GM12878 (cell line): ENCODE measurements at regions of chr20 and their contacts with region 1.

Region 1: GRCh38 chr20:47411161-47411560 is 54.7 kb upstream of the ZMYND8 start:
- DNase-seq: no peak
- ATAC-seq: no peak
- H3K4me3 ChIP-seq: peak overlapping the region; percentile 64
- H3K27ac ChIP-seq: peak overlapping the region; percentile 91
- H3K4me1 ChIP-seq: peaks cover 55% of the 10 kb centered on the region
- H3K27me3 ChIP-seq: no peaks in the 10 kb centered on the region
- CTCF ChIP-seq: no peak
- EP300 ChIP-seq: no peak
- POLR2A ChIP-seq: no peak
- RAD21 ChIP-seq: no peak

Region 2: DNA sequence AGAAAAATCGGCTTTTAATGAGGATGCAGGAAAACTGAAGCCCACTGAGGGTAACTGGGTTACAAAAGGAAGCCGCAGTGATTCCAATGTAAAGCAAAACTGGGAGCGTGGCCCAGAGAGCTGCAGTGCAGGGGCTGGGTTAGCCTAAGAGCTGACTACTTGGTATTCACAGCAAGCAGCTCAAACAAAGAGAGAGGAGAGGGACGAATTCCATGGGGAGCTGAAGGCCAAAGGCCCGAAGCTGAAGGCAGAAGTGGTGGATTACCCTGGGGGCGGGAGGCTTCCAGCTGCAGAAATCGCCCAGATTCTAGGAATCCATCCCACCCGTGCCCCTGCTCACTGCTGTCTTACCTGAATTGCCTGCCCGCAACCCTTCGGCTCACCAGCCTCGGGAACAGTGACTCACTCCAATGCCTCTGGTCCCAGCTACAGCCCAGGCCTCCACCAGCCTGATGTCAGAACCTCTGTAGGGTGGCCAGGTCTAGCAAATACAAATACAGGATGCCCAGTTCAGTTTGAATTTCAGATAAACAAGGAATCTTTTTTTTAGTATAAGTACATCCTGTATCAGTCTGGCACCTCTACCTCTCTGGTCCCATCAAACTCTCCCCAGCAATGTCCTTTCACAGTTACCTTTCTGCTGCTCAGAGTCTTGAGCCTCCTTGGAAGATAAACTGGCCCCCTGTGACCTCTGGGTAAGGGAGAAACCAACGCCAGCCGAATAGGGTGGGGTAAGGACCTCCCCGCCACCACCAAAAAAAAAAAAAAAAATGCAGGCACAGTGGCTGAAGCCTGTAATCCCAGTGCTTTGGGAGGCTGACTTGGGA is 40.1 kb before region 1 on chr20:
- CTCF ChIA-PET with region 1: no interaction called
- POLR2A ChIA-PET with region 1: no interaction called
- RAD21 ChIA-PET with region 1: no interaction called
- SMC1A ChIA-PET with region 1: no interaction called
- in situ Hi-C with region 1: no loop called
- intact Hi-C with region 1: no loop called
- DNase-seq: no peak
- ATAC-seq: no peak
- H3K4me3 ChIP-seq: no peak overlapping the region
- H3K27ac ChIP-seq: no peak overlapping the region
- H3K4me1 ChIP-seq: no peaks in the 10 kb centered on the region
- H3K27me3 ChIP-seq: no peaks in the 10 kb centered on the region
- CTCF ChIP-seq: no peak
- EP300 ChIP-seq: no peak
- POLR2A ChIP-seq: no peak
- RAD21 ChIP-seq: no peak

Region 3: DNA sequence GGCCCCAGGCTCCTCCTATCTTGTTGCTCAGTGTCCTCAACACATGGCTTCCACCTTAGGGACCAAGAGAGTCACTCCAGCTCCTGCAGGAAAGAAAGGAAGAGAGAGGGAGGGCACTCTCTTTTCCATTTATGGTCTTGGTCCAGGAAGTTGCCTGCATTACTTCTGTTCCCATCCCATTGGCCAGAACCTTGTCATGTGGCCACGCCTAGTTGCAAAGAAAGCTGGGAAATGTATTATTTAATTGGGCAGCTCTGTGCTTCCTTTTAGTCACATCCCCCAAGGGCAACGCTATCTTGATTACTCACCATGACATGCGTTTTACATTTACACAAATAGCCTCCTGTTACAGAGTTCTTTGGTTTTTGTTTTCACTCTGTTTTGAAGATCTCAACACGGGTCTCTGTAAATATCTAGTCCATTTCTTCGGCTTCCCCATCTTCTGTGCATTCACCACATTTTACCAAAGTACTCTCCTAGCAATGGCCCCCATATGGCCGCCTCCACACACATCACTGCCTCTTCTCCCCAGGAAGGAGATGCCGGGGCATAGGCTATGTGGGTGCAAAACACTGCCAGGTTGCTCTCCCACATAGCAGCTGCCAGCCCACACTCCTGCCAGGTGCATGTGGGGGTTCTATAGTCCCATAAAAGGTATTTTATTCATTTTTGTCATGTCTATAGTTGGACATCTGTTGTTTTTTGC is 19.0 kb before region 1 on chr20:
- CTCF ChIA-PET with region 1: interaction called, 6 read pairs
- POLR2A ChIA-PET with region 1: interaction called, 11 read pairs
- RAD21 ChIA-PET with region 1: interaction called, 14 read pairs
- SMC1A ChIA-PET with region 1: interaction called, 16 read pairs
- in situ Hi-C with region 1: no loop called
- intact Hi-C with region 1: no loop called
- DNase-seq: no peak
- ATAC-seq: peak; percentile 90
- H3K4me3 ChIP-seq: no peak overlapping the region
- H3K27ac ChIP-seq: peak overlapping the region; percentile 11
- H3K4me1 ChIP-seq: peaks cover 20% of the 10 kb centered on the region
- H3K27me3 ChIP-seq: no peaks in the 10 kb centered on the region
- CTCF ChIP-seq: no peak
- EP300 ChIP-seq: no peak
- POLR2A ChIP-seq: 0 out of 2 replicates have a peak, but pooled peaks have one; percentile 26
- RAD21 ChIP-seq: no peak

Region 4: GRCh38 chr20:47453142-47453782 is 42.1 kb after region 1 on chr20:
- CTCF ChIA-PET with region 1: interaction called, 6 read pairs
- POLR2A ChIA-PET with region 1: interaction called, 7 read pairs
- RAD21 ChIA-PET with region 1: interaction called, 22 read pairs
- SMC1A ChIA-PET with region 1: interaction called, 82 read pairs
- in situ Hi-C with region 1: no loop called
- intact Hi-C with region 1: loop called (anchors 1 kb)
- DNase-seq: peak; percentile 92
- ATAC-seq: peak; percentile 98
- H3K4me3 ChIP-seq: peak overlapping the region; percentile 36; the same call in 1 of the 2 replicates
- H3K27ac ChIP-seq: peak overlapping the region; percentile 87
- H3K4me1 ChIP-seq: peaks cover 31% of the 10 kb centered on the region
- H3K27me3 ChIP-seq: no peaks in the 10 kb centered on the region
- CTCF ChIP-seq: no peak
- EP300 ChIP-seq: peak; percentile 27 to 28; a peak in 2 of 4 replicates
- POLR2A ChIP-seq: peak; percentile 27; the same call in 1 of the 2 replicates
- RAD21 ChIP-seq: 0 out of 2 replicates have a peak, but pooled peaks have one; percentile 14

Region 5: GRCh38 chr20:47487175-47487917 is 76.2 kb after region 1 on chr20:
- CTCF ChIA-PET with region 1: interaction called, 21 read pairs
- POLR2A ChIA-PET with region 1: interaction called, 55 read pairs
- RAD21 ChIA-PET with region 1: interaction called, 143 read pairs
- SMC1A ChIA-PET with region 1: interaction called, 122 read pairs
- in situ Hi-C with region 1: no loop called
- intact Hi-C with region 1: loop called (anchors 1 kb)
- DNase-seq: peak; percentile 99
- ATAC-seq: peak; percentile 84
- H3K4me3 ChIP-seq: peak overlapping the region; percentile 43; the same call in 1 of the 2 replicates
- H3K27ac ChIP-seq: peak overlapping the region; percentile 98
- H3K4me1 ChIP-seq: peaks cover 56% of the 10 kb centered on the region
- H3K27me3 ChIP-seq: no peaks in the 10 kb centered on the region
- CTCF ChIP-seq: no peak
- EP300 ChIP-seq: peak; percentile 87 to 92
- POLR2A ChIP-seq: no peak
- RAD21 ChIP-seq: 0 out of 2 replicates have a peak, but pooled peaks have one; percentile 1

Region 6: GRCh38 chr20:47508278-47508677 is 97.1 kb after region 1 on chr20:
- CTCF ChIA-PET with region 1: interaction called, 31 read pairs
- POLR2A ChIA-PET with region 1: interaction called, 123 read pairs
- RAD21 ChIA-PET with region 1: interaction called, 100 read pairs
- SMC1A ChIA-PET with region 1: interaction called, 86 read pairs
- in situ Hi-C with region 1: no loop called
- intact Hi-C with region 1: loop called (anchors 5 kb)
- DNase-seq: no peak
- ATAC-seq: peak; percentile 35; the same call in 2 of the 3 replicates
- H3K4me3 ChIP-seq: peak overlapping the region; percentile 75
- H3K27ac ChIP-seq: peak overlapping the region; percentile 68
- H3K4me1 ChIP-seq: peaks cover 26% of the 10 kb centered on the region
- H3K27me3 ChIP-seq: no peaks in the 10 kb centered on the region
- CTCF ChIP-seq: no peak
- EP300 ChIP-seq: no peak
- POLR2A ChIP-seq: no peak
- RAD21 ChIP-seq: no peak